Heart left ventricle (tissue), 16 donors: ENCODE measurements at regions of chr10 and their contacts with region 1.

Region 1: GRCh38 chr10:57338823-57339558 is 928.7 kb downstream of the IPMK start:
- DNase-seq: no peak
- ATAC-seq: no peak
- H3K4me3 ChIP-seq: no peak overlapping the region
- H3K27ac ChIP-seq: no peak overlapping the region
- H3K4me1 ChIP-seq: no peaks in the 10 kb centered on the region
- H3K27me3 ChIP-seq: no peaks in the 10 kb centered on the region
- CTCF ChIP-seq: peak; percentile 49 to 77 (median 62)
- POLR2A ChIP-seq: no peak

Region 2: GRCh38 chr10:56679578-56679977 is 659.4 kb before region 1 on chr10:
- intact Hi-C with region 1: no loop called
- DNase-seq: no peak
- ATAC-seq: no peak
- H3K4me3 ChIP-seq: no peak overlapping the region
- H3K27ac ChIP-seq: no peak overlapping the region
- H3K4me1 ChIP-seq: no peaks in the 10 kb centered on the region
- H3K27me3 ChIP-seq: no peaks in the 10 kb centered on the region
- CTCF ChIP-seq: no peak
- POLR2A ChIP-seq: no peak

Region 3: DNA sequence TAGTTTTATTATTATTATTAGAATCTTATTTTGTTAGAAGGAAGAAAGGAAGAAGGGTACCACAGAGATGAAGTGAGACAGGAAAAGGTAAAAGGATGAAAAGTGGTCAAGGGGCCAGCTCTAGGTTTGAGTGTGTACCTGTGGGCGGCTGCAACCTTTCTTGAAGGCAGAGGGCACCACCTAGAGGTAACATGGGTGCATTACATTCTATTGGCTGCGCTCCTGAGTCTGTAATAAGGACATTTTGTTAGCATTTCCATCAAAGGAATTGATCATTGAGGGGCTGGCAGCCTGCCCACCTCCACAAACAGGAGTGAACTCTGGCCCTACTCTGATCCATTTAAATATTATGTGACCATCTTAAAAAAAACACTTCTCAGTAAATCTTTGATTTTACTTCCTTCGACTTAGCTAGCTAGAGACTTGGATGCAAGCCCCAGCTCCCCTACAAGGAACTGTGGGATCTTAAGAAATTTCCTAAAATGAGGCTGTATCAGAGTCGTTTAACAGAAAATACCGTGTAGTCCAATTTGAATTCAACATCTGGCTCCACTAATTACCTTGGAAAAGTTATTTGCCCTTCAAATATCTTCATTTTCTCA is 318.3 kb after region 1 on chr10:
- intact Hi-C with region 1: loop called in 1 of 10 experiments (anchors 10 kb)
- DNase-seq: peak in 2 of 5 donors; percentile 9 to 18
- ATAC-seq: peak in 1 of 4 donors; percentile 39
- H3K4me3 ChIP-seq: no peak overlapping the region
- H3K27ac ChIP-seq: no peak overlapping the region
- H3K4me1 ChIP-seq: no peaks in the 10 kb centered on the region
- H3K27me3 ChIP-seq: no peaks in the 10 kb centered on the region
- CTCF ChIP-seq: peak; percentile 37 to 67 (median 58)
- POLR2A ChIP-seq: no peak